CD14-positive monocyte (primary cell): ENCODE measurements at regions of chr12 and their contacts with region 1.

Region 1: DNA sequence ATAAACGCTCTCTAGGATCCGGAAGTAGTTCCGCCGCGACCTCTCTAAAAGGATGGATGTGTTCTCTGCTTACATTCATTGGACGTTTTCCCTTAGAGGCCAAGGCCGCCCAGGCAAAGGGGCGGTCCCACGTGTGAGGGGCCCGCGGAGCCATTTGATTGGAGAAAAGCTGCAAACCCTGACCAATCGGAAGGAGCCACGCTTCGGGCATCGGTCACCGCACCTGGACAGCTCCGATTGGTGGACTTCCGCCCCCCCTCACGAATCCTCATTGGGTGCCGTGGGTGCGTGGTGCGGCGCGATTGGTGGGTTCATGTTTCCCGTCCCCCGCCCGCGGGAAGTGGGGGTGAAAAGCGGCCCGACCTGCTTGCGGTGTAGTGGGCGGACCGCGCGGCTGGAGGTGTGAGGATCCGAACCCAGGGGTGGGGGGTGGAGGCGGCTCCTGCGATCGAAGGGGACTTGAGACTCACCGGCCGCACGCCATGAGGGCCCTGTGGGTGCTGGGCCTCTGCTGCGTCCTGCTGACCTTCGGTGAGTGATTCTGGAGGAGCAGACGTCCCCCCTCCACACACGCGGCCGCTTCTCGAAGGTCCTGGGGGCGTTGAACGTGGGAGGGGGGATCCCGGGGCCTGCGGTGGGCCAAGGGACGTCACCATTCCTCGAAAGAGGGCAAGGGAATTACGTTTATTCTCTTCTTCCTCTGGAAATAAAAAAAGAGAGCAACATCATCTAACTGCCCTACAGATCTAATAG is at the start of gene HSP90B1:
- DNase-seq: peak; percentile 100
- H3K4me3 ChIP-seq: peak within 1 kb of the TSS; percentile 77 to 93 (median 79)
- H3K4me3 Mint-ChIP-seq: peak within 1 kb of the TSS; percentile 95 to 99
- H3K27ac ChIP-seq: peak within 1 kb of the TSS; percentile 92 to 97
- H3K27ac Mint-ChIP-seq: peak within 1 kb of the TSS; percentile 95 to 99 (median 98)
- H3K4me1 ChIP-seq: peaks cover 35 to 44% of the 10 kb centered on the region in 2 donors
- H3K4me1 Mint-ChIP-seq: peaks cover 37% of the 10 kb centered on the region
- H3K27me3 ChIP-seq: no peaks in the 10 kb centered on the region
- H3K27me3 Mint-ChIP-seq: peaks cover 0 to 3% (median 2%) of the 10 kb centered on the region in 3 donors
- CTCF ChIP-seq: no peak
- polyA plus RNA-seq, gene HSP90B1: 97.9 to 177 (median 108) TPM

Region 2: GRCh38 chr12:103821773-103822172 is 108.4 kb before region 1 on chr12:
- intact Hi-C with region 1: no loop called
- DNase-seq: no peak
- H3K4me3 ChIP-seq: no peak overlapping the region
- H3K4me3 Mint-ChIP-seq: no peak overlapping the region
- H3K27ac ChIP-seq: no peak overlapping the region
- H3K27ac Mint-ChIP-seq: no peak overlapping the region
- H3K4me1 ChIP-seq: peaks cover 0 to 3% of the 10 kb centered on the region in 2 donors
- H3K4me1 Mint-ChIP-seq: peaks cover 7% of the 10 kb centered on the region
- H3K27me3 ChIP-seq: no peaks in the 10 kb centered on the region
- H3K27me3 Mint-ChIP-seq: no peaks in the 10 kb centered on the region
- CTCF ChIP-seq: no peak

Region 3: GRCh38 chr12:103840876-103841689 is 89.1 kb before region 1 on chr12 and contains the start of gene NT5DC3:
- intact Hi-C with region 1: loop called in 1 of 2 experiments (anchors 2 kb)
- DNase-seq: peak; percentile 78 to 83 (median 79)
- H3K4me3 ChIP-seq: peak within 1 kb of the TSS; percentile 58 to 90 (median 87)
- H3K4me3 Mint-ChIP-seq: peak within 1 kb of the TSS; percentile 92 to 93
- H3K27ac ChIP-seq: peak within 1 kb of the TSS in 1 of 2 donors; percentile 41
- H3K27ac Mint-ChIP-seq: peak within 1 kb of the TSS in 6 of 7 donors; percentile 41 to 83 (median 72)
- H3K4me1 ChIP-seq: peaks cover 22 to 31% of the 10 kb centered on the region in 2 donors
- H3K4me1 Mint-ChIP-seq: peaks cover 28% of the 10 kb centered on the region
- H3K27me3 ChIP-seq: no peaks in the 10 kb centered on the region
- H3K27me3 Mint-ChIP-seq: peaks cover 2 to 7% (median 5%) of the 10 kb centered on the region in 3 donors
- CTCF ChIP-seq: no peak
- polyA plus RNA-seq, gene NT5DC3: 0.27 to 4.8 (median 0.93) TPM

Region 4: GRCh38 chr12:103956516-103957027 is 26.4 kb after region 1 on chr12:
- intact Hi-C with region 1: loop called in 1 of 2 experiments (anchors 2 kb)
- DNase-seq: no peak
- H3K4me3 ChIP-seq: peak overlapping the region; percentile 71 to 88 (median 86)
- H3K4me3 Mint-ChIP-seq: peak overlapping the region; percentile 88 to 94
- H3K27ac ChIP-seq: peak overlapping the region; percentile 67 to 85
- H3K27ac Mint-ChIP-seq: peak overlapping the region; percentile 93 to 99 (median 96)
- H3K4me1 ChIP-seq: peaks cover 13 to 18% of the 10 kb centered on the region in 2 donors
- H3K4me1 Mint-ChIP-seq: peaks cover 15% of the 10 kb centered on the region
- H3K27me3 ChIP-seq: no peaks in the 10 kb centered on the region
- H3K27me3 Mint-ChIP-seq: peaks cover 0 to 2% (median 2%) of the 10 kb centered on the region in 3 donors
- CTCF ChIP-seq: no peak

Region 5: DNA sequence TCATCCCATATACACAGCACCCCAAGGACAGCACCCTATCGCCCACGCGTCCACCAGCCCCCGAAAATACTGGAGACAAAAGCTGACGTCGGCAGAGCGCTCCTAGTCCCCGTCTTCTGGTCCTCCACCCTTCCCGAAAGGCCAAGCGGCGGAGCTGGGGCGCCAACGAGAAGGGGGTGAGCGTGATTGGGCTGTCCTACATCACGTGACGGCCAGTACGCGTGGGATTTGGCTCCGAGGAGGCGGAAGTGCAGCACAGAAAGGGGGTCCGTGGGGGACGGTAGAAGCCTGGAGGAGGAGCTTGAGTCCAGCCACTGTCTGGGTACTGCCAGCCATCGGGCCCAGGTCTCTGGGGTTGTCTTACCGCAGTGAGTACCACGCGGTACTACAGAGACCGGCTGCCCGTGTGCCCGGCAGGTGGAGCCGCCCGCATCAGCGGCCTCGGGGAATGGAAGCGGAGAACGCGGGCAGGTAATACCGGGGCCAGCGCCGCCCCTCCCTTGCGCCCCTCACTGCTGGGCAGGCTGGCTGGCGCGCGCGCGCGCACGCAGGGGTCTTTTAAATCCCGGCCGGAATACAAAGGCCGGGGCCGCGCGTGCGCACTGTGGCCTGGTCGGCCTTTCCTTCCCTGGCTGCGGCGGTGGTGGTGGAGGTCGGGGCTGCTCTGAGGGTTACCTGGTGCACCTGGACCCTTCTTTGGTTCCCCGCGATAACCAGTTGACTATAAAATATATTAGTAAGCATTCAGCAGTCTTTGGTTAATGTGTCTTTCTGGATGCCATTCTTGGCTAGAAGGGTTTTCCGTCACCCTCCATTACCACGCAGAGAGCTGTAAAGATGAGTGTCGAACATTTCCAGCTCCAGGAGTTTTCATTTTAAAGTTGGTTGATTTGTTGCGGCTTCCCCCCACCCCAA is 35.6 kb after region 1 on chr12 and contains the start of gene TDG:
- intact Hi-C with region 1: loop called in 1 of 2 experiments (anchors 5 kb)
- DNase-seq: peak; percentile 93 to 97 (median 96)
- H3K4me3 ChIP-seq: peak within 1 kb of the TSS; percentile 56 to 95 (median 84)
- H3K4me3 Mint-ChIP-seq: peak within 1 kb of the TSS; percentile 93 to 97
- H3K27ac ChIP-seq: peak within 1 kb of the TSS; percentile 74 to 92
- H3K27ac Mint-ChIP-seq: peak within 1 kb of the TSS; percentile 94 to 98 (median 97)
- H3K4me1 ChIP-seq: peaks cover 20 to 28% of the 10 kb centered on the region in 2 donors
- H3K4me1 Mint-ChIP-seq: peaks cover 31% of the 10 kb centered on the region
- H3K27me3 ChIP-seq: no peaks in the 10 kb centered on the region
- H3K27me3 Mint-ChIP-seq: peaks cover 0 to 2% (median 0%) of the 10 kb centered on the region in 3 donors
- CTCF ChIP-seq: peak; percentile 8
- polyA plus RNA-seq, gene TDG: 12.6 to 22.4 (median 20.1) TPM

Region 6: GRCh38 chr12:104064031-104064822 is 134.0 kb after region 1 on chr12 and contains the start of gene HCFC2:
- intact Hi-C with region 1: loop called (anchors 1 to 10 kb)
- DNase-seq: peak; percentile 76 to 79 (median 79)
- H3K4me3 ChIP-seq: peak within 1 kb of the TSS; percentile 57 to 96 (median 95)
- H3K4me3 Mint-ChIP-seq: peak within 1 kb of the TSS; percentile 93 to 95
- H3K27ac ChIP-seq: peak within 1 kb of the TSS; percentile 26 to 82
- H3K27ac Mint-ChIP-seq: peak within 1 kb of the TSS; percentile 87 to 96 (median 92)
- H3K4me1 ChIP-seq: peaks cover 14 to 22% of the 10 kb centered on the region in 2 donors
- H3K4me1 Mint-ChIP-seq: peaks cover 23% of the 10 kb centered on the region
- H3K27me3 ChIP-seq: peaks cover 0 to 8% of the 10 kb centered on the region in 2 donors
- H3K27me3 Mint-ChIP-seq: peaks cover 8 to 19% (median 12%) of the 10 kb centered on the region in 3 donors
- CTCF ChIP-seq: no peak
- polyA plus RNA-seq, gene HCFC2: 3.3 to 8.7 (median 4.3) TPM

Region 7: GRCh38 chr12:104411826-104412641 is 481.8 kb after region 1 on chr12:
- intact Hi-C with region 1: no loop called
- DNase-seq: no peak
- H3K4me3 ChIP-seq: no peak overlapping the region
- H3K4me3 Mint-ChIP-seq: no peak overlapping the region
- H3K27ac ChIP-seq: no peak overlapping the region
- H3K27ac Mint-ChIP-seq: peak overlapping the region in 1 of 7 donors; percentile 7
- H3K4me1 ChIP-seq: no peaks in the 10 kb centered on the region
- H3K4me1 Mint-ChIP-seq: no peaks in the 10 kb centered on the region
- H3K27me3 ChIP-seq: no peaks in the 10 kb centered on the region
- H3K27me3 Mint-ChIP-seq: peaks cover 0 to 6% (median 3%) of the 10 kb centered on the region in 3 donors
- CTCF ChIP-seq: no peak

Region 8: DNA sequence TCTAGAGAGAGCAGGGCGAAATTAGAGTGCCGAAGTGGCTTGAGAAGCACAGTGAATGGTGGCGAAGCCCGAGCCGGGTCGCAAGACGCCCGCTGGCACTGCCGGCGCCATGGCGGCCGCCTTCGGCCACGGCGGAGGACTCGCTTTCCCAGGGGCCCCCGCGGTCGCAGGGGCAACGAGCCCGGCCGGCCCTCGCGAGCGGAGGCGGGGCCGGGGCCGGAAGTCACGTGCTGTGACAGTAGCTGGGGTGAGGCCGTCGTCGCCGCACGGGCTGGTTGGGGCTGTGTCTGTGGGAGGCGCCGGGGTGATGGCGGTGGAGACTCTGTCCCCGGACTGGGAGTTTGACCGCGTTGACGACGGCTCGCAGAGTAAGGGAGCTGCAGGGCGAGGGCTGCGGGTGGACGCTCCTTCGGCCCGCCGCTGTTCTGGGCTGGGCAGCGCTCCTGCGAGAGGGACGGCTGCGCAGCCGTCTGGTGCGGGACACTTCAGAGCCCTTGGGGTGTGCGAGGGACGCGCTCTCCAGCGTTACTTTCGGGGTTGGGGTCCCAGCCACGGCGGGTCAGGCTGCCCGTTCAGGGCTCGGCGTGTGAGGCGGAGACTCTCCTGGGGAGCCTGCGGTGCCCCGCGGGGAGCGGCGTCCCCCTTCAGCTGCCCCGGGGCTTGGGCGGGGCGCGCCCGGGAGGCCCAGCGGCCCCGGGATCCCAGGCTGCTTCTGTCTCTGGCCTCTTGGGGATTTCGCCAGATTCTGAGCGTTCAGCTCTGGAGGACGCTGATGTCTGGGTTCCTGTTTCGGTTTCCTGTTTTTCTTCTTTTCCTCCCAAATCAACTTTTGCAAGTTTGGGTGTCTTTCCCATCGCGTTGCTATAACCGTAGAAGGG is 1177.5 kb after region 1 on chr12 and contains the start of gene WASHC4:
- intact Hi-C with region 1: loop called in 1 of 2 experiments (anchors 10 kb)
- DNase-seq: peak; percentile 89 to 92 (median 90)
- H3K4me3 ChIP-seq: peak within 1 kb of the TSS; percentile 79 to 100 (median 97)
- H3K4me3 Mint-ChIP-seq: peak within 1 kb of the TSS; percentile 93 to 99
- H3K27ac ChIP-seq: peak within 1 kb of the TSS; percentile 98 to 100
- H3K27ac Mint-ChIP-seq: peak within 1 kb of the TSS; percentile 95 to 98 (median 97)
- H3K4me1 ChIP-seq: peaks cover 14 to 44% of the 10 kb centered on the region in 2 donors
- H3K4me1 Mint-ChIP-seq: peaks cover 38% of the 10 kb centered on the region
- H3K27me3 ChIP-seq: peaks cover 7 to 11% of the 10 kb centered on the region in 2 donors
- H3K27me3 Mint-ChIP-seq: peaks cover 1 to 6% (median 4%) of the 10 kb centered on the region in 3 donors
- CTCF ChIP-seq: no peak
- polyA plus RNA-seq, gene WASHC4: 62.6 to 95.3 (median 69.0) TPM